ENCODE measurements at regions of chr11 and their contacts with region 1.

Region 1: DNA sequence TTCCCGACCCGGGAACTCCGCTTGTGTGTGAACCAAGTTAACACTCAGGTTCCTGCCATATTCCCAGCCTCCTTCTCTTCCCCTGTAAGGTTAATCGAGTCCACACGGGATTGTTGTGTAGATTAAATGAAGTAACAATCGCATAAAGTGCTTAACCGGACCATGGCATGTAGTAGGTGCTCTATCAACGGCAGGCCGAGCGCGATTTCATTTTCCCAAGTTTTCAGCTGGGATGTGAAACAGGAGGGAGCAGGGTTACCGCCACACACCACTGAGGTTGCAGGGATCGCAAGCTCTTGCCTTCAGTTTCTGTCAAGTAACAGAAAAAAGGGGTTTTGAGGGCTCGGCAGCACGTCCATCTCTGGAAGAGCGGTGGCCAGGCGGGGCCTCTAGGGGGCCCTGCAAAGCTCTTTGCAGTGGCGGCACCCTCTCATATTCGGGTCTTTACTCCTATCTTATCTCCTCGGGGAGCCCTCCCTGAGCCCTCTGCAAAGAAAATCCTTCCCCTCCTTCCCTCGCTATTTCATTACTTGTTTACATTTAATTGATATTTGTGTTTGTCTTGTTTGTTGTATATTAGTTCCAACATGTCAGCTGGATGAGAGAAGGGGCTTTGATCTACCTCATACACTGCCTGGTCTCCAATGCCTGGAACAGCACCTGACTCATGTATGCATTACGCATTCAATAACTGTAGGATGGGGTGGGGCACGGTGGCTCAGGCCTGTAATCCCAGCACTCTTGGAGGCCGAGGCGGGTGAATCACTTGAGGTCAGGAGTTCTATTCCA is 818 bp upstream of the PLEKHA7 start:
- DNase-seq: peak in 1 of 2 experiments; percentile 72
- H3K4me3 ChIP-seq: peak overlapping the region; percentile 74 to 92 (median 82)
- H3K27ac ChIP-seq: no peak overlapping the region
- H3K4me1 ChIP-seq: peaks cover 10 to 27% (median 14%) of the 10 kb centered on the region in 4 experiments; a peak in 6 of 7 replicates
- H3K27me3 ChIP-seq: peaks cover 0 to 3% (median 1%) of the 10 kb centered on the region in 4 experiments; a peak in 3 of 7 replicates
- CTCF ChIP-seq: peak; percentile 58 to 77 (median 66)
- EP300 ChIP-seq: no peak
- POLR2A ChIP-seq: no peak
- RAD21 ChIP-seq: peak; percentile 17 to 43; a peak in 3 of 4 replicates

Region 2: DNA sequence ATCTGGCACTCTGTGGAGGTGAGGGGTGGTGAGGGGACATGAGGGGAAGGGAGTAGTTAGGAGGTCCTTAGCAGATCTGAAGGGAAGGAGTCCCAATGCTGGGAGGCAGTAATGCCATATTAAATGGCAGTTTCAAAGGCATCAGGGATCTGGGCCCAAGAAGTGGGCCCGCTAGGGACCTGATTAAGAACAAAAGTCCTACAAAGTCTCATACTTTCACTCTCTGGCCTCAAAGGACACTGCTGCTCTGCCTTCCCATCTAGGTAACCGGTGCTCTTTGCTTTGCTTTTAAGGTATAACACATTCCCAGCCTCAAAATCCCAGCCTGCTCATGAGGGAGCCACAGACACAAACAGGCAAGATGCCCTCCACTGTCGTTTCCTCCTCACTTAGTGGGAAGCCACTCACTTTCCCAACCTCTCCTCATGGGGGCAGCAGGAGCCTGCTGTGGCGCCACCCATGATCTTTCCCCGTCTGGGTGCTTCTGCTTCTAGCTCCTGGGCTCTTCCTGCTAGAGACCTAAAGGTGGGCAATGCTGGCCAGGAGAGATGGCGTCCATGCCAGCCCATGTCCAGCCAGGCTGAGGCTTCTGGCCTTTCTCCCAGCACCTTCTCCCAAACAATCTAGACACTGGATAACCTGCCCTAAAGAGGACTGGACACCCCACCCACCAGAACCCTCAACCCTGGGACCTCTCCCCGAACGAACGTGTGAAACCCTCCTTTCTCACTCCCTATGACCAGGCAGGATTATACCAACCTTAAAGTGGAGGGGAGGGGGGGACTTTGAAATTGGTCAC is 69.2 kb before region 1 on chr11:
- CTCF ChIA-PET with region 1: interaction called, 12 read pairs
- POLR2A ChIA-PET with region 1: interaction called, 3 read pairs
- DNase-seq: peak in 1 of 2 experiments; percentile 69
- H3K4me3 ChIP-seq: no peak overlapping the region
- H3K27ac ChIP-seq: no peak overlapping the region
- H3K4me1 ChIP-seq: peaks cover 0 to 8% (median 4%) of the 10 kb centered on the region in 4 experiments; a peak in 4 of 7 replicates
- H3K27me3 ChIP-seq: no peaks in the 10 kb centered on the region
- CTCF ChIP-seq: peak; percentile 58 to 71 (median 64)
- EP300 ChIP-seq: no peak
- POLR2A ChIP-seq: no peak
- RAD21 ChIP-seq: peak; percentile 82 to 84

Region 3: GRCh38 chr11:17001871-17002270 is 13.2 kb before region 1 on chr11:
- CTCF ChIA-PET with region 1: interaction called, 34 read pairs
- POLR2A ChIA-PET with region 1: interaction called, 9 read pairs
- DNase-seq: no peak
- H3K4me3 ChIP-seq: no peak overlapping the region
- H3K27ac ChIP-seq: no peak overlapping the region
- H3K4me1 ChIP-seq: no peaks in the 10 kb centered on the region; a peak in 1 of 7 replicates
- H3K27me3 ChIP-seq: no peaks in the 10 kb centered on the region
- CTCF ChIP-seq: no peak
- EP300 ChIP-seq: no peak
- POLR2A ChIP-seq: no peak
- RAD21 ChIP-seq: no peak

Region 4: GRCh38 chr11:17026487-17027082 is 11.6 kb after region 1 on chr11:
- CTCF ChIA-PET with region 1: interaction called, 15 read pairs
- POLR2A ChIA-PET with region 1: interaction called, 7 read pairs
- DNase-seq: no peak
- H3K4me3 ChIP-seq: no peak overlapping the region
- H3K27ac ChIP-seq: no peak overlapping the region
- H3K4me1 ChIP-seq: no peaks in the 10 kb centered on the region; a peak in 1 of 7 replicates
- H3K27me3 ChIP-seq: no peaks in the 10 kb centered on the region
- CTCF ChIP-seq: no peak
- EP300 ChIP-seq: no peak
- POLR2A ChIP-seq: no peak
- RAD21 ChIP-seq: no peak

Region 5: GRCh38 chr11:17077520-17078401 is 62.7 kb after region 1 on chr11 and contains the start of gene RPS13:
- CTCF ChIA-PET with region 1: interaction called, 3 read pairs
- POLR2A ChIA-PET with region 1: interaction called, 16 read pairs
- DNase-seq: peak; percentile 91 to 98
- H3K4me3 ChIP-seq: peak within 1 kb of the TSS; percentile 84 to 99 (median 94)
- H3K27ac ChIP-seq: peak within 1 kb of the TSS; percentile 97
- H3K4me1 ChIP-seq: peaks cover 0 to 5% (median 3%) of the 10 kb centered on the region in 4 experiments; a peak in 6 of 7 replicates
- H3K27me3 ChIP-seq: no peaks in the 10 kb centered on the region
- CTCF ChIP-seq: peak in 1 of 3 experiments; percentile 1; a peak in 1 of 4 replicates
- EP300 ChIP-seq: no peak
- POLR2A ChIP-seq: peak; percentile 92 to 97; a peak in 2 of 3 replicates
- RAD21 ChIP-seq: no peak
- total RNA-seq, gene RPS13: 1,310 and 1,336 TPM in 2 replicates